Common myeloid progenitor, CD34-positive (primary cell): ENCODE measurements at regions of chr2 and their contacts with region 1.

Region 1: DNA sequence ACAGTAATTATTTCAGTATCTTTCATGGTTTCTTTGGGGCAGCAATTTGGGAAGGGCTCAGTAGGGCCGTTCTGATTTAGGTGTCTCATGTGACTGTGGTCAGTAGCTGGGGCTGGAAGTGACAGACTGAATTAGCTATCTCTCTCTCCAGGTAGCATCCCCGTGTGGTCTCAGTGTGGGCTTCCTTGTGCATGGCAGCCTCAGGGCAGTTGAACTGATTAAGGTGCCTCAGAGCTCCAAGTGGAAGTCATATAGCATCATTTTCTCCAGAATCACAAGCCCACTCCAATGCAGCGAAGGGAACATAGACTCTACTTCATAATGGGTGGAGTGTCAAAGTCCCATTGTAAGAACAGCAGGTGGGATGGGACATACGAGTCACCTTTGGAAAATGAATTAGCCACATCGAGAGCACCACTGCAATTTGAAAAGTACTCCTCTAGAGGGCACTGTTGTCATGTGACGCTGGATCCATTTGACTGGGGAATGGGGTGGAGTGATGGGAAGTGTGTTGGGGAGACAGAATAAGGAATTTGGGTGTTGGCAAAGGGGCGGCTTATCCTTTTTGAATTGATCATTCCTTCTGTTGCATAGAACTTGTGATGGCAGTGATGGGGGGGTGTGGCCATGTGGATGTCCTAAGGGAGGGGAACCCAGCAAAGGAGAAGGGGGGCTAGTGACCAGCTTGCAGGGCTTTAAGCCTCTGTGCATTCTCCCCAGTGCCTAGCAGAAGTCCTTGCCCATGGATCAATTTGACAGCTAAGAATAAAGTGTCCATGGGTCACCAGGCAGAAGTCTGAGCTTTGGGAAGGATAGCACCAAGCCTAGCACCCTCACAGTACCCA is 39.3 kb upstream of the FAM136A start:
- DNase-seq: peak; percentile 31 to 52 (median 39)
- H3K4me3 ChIP-seq: no peak overlapping the region
- H3K27ac ChIP-seq: no peak overlapping the region
- H3K4me1 ChIP-seq: no peaks in the 10 kb centered on the region
- H3K27me3 ChIP-seq: peaks cover 0 to 23% (median 11%) of the 10 kb centered on the region in 5 experiments

Region 2: GRCh38 chr2:70328921-70329561 is 12.1 kb before region 1 on chr2:
- CTCF ChIA-PET with region 1: interaction called, 12 read pairs
- POLR2A ChIA-PET with region 1: interaction called, 3 read pairs
- DNase-seq: no peak
- H3K4me3 ChIP-seq: no peak overlapping the region
- H3K27ac ChIP-seq: no peak overlapping the region
- H3K4me1 ChIP-seq: no peaks in the 10 kb centered on the region
- H3K27me3 ChIP-seq: peaks cover 0 to 5% (median 0%) of the 10 kb centered on the region in 5 experiments

Region 3: GRCh38 chr2:70607121-70607561 is 266.0 kb after region 1 on chr2:
- CTCF ChIA-PET with region 1: interaction called, 14 read pairs
- POLR2A ChIA-PET with region 1: no interaction called
- DNase-seq: no peak
- H3K4me3 ChIP-seq: no peak overlapping the region
- H3K27ac ChIP-seq: no peak overlapping the region
- H3K4me1 ChIP-seq: peaks cover 0 to 4% (median 0%) of the 10 kb centered on the region in 4 experiments
- H3K27me3 ChIP-seq: peaks cover 0 to 8% (median 0%) of the 10 kb centered on the region in 5 experiments

Region 4: DNA sequence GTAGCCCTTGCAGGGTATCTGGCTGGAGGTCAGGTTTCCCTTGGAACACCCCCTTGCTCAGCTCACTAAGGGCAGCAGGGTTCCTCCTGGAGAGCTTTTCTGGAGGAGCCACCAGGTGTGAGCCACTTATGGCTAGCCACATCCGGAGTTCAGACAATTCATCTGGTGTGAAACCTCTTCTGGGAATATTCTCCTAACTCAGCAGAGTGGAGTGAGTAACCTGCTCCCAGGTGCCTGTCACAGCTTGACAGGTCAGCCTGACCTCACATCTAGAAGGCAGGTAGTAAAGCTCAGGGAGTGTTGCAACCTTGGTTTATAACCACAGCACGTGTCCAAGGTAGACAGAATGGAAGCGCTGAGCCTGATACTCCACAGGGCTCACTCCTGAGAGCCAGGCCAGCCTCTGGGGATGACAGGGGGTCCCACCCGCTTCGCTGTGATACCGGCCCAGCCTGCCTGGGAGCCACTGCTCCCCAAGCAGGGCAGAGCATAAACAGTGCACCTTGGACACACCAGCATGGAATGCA is 275.1 kb after region 1 on chr2:
- CTCF ChIA-PET with region 1: interaction called, 62 read pairs
- POLR2A ChIA-PET with region 1: no interaction called
- DNase-seq: no peak
- H3K4me3 ChIP-seq: no peak overlapping the region
- H3K27ac ChIP-seq: no peak overlapping the region
- H3K4me1 ChIP-seq: no peaks in the 10 kb centered on the region
- H3K27me3 ChIP-seq: peaks cover 0 to 10% (median 3%) of the 10 kb centered on the region in 5 experiments

Region 5: DNA sequence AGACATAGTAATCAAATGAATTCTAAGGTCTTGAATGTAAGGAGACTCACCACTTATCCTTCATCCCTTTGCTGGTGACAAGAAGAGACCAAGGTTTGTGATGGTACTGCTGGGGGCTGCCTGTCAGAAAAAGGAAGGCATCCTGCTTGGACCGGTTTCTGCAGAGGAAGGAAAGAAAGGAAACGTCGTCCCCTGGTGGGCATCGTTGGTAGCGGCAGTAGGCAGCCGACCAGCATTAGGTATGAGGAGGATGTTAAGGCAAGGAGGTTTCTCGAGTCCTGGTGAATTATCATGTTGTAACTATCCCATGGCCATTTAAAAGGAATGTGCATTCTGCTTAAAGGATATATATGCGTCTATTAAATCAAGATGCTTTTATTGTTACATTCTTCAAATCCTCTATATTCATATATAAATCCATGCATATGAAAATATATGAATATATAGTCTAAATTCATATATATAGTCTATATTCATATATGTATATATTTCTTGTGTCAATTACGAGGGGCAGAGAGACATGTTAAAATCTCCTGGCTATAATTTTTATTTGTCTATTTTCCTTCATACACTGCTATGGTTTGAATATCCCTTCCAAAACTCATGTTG is 306.8 kb after region 1 on chr2:
- CTCF ChIA-PET with region 1: interaction called, 35 read pairs
- POLR2A ChIA-PET with region 1: no interaction called
- DNase-seq: peak; percentile 69 to 84 (median 76)
- H3K4me3 ChIP-seq: no peak overlapping the region
- H3K27ac ChIP-seq: no peak overlapping the region
- H3K4me1 ChIP-seq: no peaks in the 10 kb centered on the region
- H3K27me3 ChIP-seq: peaks cover 0 to 5% (median 3%) of the 10 kb centered on the region in 5 experiments